Thyroid gland (tissue), 4 donors: ENCODE measurements at regions of chr18 and their contacts with region 1.

Region 1: DNA sequence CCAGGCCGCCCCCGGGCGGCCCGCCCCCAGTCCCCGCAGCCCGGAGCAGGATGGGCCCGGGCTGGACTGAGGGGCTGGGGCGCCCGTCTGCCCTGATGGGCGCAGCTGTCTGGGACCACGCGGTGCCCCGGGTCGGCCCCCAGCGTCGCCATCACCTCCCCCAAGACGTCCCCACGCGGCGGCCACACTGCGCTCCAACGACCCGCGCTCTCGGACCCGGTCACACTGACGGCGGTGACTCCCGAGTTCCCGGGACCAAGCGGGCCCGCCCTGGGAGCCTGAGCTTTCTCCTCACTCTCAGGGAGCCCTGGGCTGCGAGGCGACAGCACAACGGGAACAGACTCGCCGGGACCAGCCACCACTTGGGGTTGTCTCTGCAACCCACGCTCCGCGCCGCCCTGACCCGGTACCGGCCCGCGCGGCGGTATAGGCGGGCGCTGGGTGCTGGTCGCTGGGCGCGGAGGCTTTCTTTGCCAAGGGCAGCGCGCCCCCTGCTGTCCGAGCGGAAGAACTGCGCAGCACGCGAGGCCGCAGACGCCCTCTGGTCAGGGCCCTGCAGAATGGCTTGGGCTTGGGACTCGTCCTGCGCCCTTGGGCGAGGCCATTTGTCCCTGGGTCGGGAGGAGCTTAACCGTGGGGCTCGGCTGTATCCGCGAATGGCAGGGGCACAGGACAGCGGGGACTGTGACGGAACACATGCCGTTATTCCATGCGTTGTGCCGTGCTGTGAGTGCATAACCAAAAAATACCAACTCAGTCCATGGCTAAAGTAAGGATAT is 54.8 kb upstream of the ANKRD62 start:
- DNase-seq: peak; percentile 83 to 84
- H3K4me3 ChIP-seq: peak overlapping the region in 1 of 3 donors; percentile 23
- H3K27ac ChIP-seq: peak overlapping the region in 1 of 3 donors; percentile 20
- H3K4me1 ChIP-seq: peaks cover 7 to 9% of the 10 kb centered on the region in 2 donors
- H3K27me3 ChIP-seq: no peaks in the 10 kb centered on the region
- CTCF ChIP-seq: peak; percentile 87 to 99 (median 98)
- POLR2A ChIP-seq: peak in 1 of 2 donors; percentile 14

Region 2: GRCh38 chr18:11980555-11981382 is 58.1 kb before region 1 on chr18:
- intact Hi-C with region 1: no loop called
- DNase-seq: peak; percentile 99
- H3K4me3 ChIP-seq: peak overlapping the region; percentile 10 to 77 (median 30)
- H3K27ac ChIP-seq: peak overlapping the region; percentile 89 to 95 (median 93)
- H3K4me1 ChIP-seq: peaks cover 8 to 29% of the 10 kb centered on the region in 2 donors
- H3K27me3 ChIP-seq: no peaks in the 10 kb centered on the region
- CTCF ChIP-seq: peak in 2 of 6 experiments; percentile 7 to 21
- POLR2A ChIP-seq: peak; percentile 76 to 93

Region 3: GRCh38 chr18:11995445-11996189 is 43.2 kb before region 1 on chr18:
- intact Hi-C with region 1: loop called (anchors 5 kb)
- DNase-seq: peak; percentile 87 to 90
- H3K4me3 ChIP-seq: no peak overlapping the region
- H3K27ac ChIP-seq: peak overlapping the region; percentile 37 to 77 (median 63)
- H3K4me1 ChIP-seq: peaks cover 31 to 62% of the 10 kb centered on the region in 2 donors
- H3K27me3 ChIP-seq: no peaks in the 10 kb centered on the region
- CTCF ChIP-seq: peak; percentile 55 to 91 (median 78)
- POLR2A ChIP-seq: peak in 1 of 2 donors; percentile 21